Left ventricle myocardium superior (tissue), 1 donor: ENCODE measurements at regions of chr1 and their contacts with region 1.

Region 1: DNA sequence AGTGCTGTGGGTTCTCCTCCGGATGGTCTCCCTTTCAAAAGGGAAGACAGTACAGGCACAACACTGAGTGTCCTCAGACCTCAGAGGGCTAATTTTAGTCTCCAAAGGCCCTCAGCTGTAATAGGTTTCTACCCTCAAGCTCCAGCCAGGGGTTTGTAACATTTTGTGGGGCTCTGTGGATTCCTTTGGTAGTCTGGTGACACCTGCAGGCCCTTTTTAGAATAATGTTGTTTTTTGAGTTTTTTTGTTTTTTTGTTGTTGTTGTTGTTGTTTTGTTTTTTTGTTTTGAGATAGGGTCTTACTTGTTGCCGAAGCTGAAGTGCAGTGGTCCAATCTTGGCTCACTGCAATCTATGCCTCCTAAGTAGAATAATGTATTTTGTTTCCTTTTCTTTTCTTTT is 15.0 kb upstream of the TMEM201 start:
- DNase-seq: no peak
- ATAC-seq: peak; percentile 68

Region 2: DNA sequence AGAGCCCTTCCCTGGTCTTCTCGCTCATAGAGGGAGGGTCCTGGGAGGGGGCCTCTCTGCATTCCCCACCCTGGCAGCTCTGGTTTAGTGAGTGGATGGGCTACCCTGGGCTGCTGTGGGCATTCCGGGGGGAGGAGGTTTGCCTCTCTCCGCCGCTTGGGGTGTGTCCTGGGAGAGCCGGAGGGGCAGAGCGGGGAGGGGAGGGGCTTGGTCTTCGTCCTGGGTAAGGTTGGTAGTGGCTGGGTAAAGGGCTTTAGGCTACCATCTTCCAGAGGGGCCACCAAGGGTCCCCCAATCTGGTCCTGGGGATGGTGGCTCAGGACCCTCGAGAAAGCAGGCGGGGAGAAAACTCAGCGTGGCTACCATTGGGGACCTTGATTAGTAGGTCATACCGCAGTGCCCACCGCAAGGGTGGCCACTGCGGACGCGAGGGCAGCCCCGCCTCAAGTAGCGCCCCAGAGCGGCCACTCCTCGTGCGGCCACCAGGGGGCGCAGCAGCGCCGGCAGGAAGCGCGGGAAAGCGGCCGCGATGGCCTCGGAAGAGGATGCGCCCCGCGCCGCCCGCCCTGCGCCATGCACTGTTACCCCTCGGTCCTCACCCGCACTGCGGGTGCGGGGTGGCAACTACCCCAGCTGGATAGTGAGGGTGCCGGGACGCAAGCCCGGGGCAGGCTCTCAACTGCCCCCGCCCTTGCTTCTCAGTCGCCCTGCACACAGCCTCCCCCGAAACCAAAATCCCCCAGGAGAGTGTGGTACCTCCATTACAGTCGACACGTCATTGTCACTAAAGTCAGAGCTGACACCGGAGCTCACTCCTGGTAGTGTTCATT is 78.6 kb before region 1 on chr1:
- intact Hi-C with region 1: loop called (anchors 1 kb)
- DNase-seq: peak; percentile 79
- ATAC-seq: peak; percentile 76